Mammary epithelial cell (primary cell): ENCODE measurements at regions of chr13 and their contacts with region 1.

Region 1: DNA sequence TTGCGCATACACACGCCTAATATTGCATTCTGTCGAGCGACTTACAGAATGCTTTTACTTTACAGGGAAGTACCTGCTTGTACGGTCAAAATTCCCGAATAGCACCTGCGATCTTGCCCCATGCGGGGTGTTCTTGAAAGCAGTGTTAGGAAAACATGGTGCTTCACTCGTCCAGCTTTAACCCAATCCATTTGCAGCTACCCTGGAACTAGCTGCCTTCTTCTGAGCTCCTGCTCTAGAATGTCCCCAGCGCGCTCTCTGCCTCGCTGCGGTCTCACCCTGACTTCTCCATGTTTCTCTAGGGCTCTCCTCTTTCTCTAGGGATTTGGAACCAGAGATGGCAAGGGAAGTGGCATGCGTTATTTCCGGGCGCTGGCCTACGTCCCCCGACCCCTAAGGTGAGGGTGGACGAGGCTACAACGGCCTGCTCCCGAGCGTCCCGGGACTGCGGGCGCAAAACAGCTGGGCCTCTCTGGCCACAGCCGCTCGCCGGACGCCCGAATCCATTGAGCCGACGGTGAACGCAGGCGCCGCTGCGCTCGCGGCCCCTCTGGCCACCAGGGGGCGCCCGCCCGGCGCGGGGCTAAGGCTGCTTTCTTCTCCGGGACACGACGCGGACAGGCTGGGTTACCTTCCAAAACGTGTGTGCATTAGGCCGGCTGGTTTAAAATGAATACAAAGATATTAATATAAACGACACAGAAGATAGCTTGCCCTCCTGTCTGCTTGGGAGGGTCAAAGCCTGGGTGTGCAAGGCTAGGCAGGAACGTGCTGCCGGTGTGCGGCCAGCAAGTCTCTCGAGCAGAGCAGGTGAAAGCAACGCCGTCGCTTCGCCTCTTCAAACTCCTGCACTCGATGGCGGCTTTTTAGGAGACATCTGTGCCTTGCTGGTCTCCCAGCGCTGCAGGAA is 1.8 kb upstream of the SPRY2 start:
- DNase-seq: peak; percentile 75
- H3K4me3 ChIP-seq: peak overlapping the region; percentile 45 to 90 (median 59)
- H3K27ac ChIP-seq: no peak overlapping the region
- H3K4me1 ChIP-seq: peaks cover 12% of the 10 kb centered on the region
- H3K27me3 ChIP-seq: no peaks in the 10 kb centered on the region
- CTCF ChIP-seq: peak; percentile 90 to 95

Region 2: DNA sequence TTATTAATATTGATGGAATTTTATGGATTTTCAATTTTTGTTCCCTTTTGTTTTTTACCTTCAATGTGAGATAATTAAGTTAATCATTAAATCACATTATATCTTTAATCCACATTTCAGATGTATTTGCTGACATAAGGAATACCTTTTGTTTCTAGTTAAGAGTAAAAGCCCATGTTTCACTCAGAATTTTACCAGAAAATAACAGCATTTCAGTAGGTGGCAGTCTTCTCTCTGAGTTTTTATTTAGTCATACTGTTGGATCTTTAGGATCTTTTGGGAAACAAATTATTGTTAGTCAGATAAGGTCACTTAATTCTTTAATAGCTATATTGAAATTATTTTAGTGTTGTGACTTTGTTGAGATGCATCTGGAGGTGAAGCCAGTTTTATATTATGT is 793.8 kb before region 1 on chr13:
- CTCF ChIA-PET with region 1: no interaction called
- dilution Hi-C with region 1: no loop called
- in situ Hi-C with region 1: no loop called
- intact Hi-C with region 1: loop called (anchors 1 kb)
- DNase-seq: peak; percentile 23
- H3K4me3 ChIP-seq: no peak overlapping the region
- H3K27ac ChIP-seq: peak overlapping the region; percentile 3
- H3K4me1 ChIP-seq: peaks cover 5% of the 10 kb centered on the region
- H3K27me3 ChIP-seq: no peaks in the 10 kb centered on the region
- CTCF ChIP-seq: peak; percentile 48 to 55

Region 3: GRCh38 chr13:79775830-79776229 is 566.9 kb before region 1 on chr13:
- CTCF ChIA-PET with region 1: no interaction called
- dilution Hi-C with region 1: no loop called
- in situ Hi-C with region 1: loop called (anchors 10 kb)
- intact Hi-C with region 1: loop called (anchors 1 kb)
- DNase-seq: peak; percentile 46
- H3K4me3 ChIP-seq: no peak overlapping the region
- H3K27ac ChIP-seq: no peak overlapping the region
- H3K4me1 ChIP-seq: peaks cover 29% of the 10 kb centered on the region
- H3K27me3 ChIP-seq: no peaks in the 10 kb centered on the region
- CTCF ChIP-seq: peak; percentile 53 to 76

Region 4: DNA sequence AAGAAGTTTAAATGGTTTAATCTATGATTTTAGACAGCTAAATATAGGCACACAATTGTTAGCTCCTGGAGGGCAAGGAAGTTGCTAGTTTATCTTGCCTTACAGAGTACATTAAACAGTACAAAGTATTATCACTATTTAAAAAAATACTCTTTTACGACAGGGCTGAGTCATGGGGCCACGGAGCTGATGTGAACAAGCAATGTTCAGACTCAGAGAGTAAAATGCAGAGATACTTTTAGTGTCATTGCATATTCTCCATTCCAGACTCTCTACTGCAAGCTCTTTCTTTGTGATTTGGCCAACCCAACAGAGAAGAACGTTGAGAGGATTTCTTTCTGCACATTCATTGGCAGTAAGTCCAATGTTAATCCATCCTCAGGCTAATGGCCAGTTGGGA is 354.2 kb before region 1 on chr13:
- CTCF ChIA-PET with region 1: no interaction called
- dilution Hi-C with region 1: no loop called
- in situ Hi-C with region 1: no loop called
- intact Hi-C with region 1: loop called (anchors 1 kb)
- DNase-seq: peak; percentile 74
- H3K4me3 ChIP-seq: no peak overlapping the region
- H3K27ac ChIP-seq: peak overlapping the region; percentile 99
- H3K4me1 ChIP-seq: peaks cover 49% of the 10 kb centered on the region
- H3K27me3 ChIP-seq: no peaks in the 10 kb centered on the region
- CTCF ChIP-seq: no peak

Region 5: GRCh38 chr13:80048802-80049201 is 293.9 kb before region 1 on chr13:
- CTCF ChIA-PET with region 1: no interaction called
- dilution Hi-C with region 1: no loop called
- in situ Hi-C with region 1: loop called (anchors 5 to 25 kb)
- intact Hi-C with region 1: no loop called
- DNase-seq: peak; percentile 95
- H3K4me3 ChIP-seq: no peak overlapping the region
- H3K27ac ChIP-seq: peak overlapping the region; percentile 5
- H3K4me1 ChIP-seq: peaks cover 27% of the 10 kb centered on the region
- H3K27me3 ChIP-seq: no peaks in the 10 kb centered on the region
- CTCF ChIP-seq: no peak

Region 6: GRCh38 chr13:80265348-80265747 is 77.4 kb before region 1 on chr13:
- CTCF ChIA-PET with region 1: no interaction called
- dilution Hi-C with region 1: no loop called
- in situ Hi-C with region 1: no loop called
- intact Hi-C with region 1: no loop called
- DNase-seq: no peak
- H3K4me3 ChIP-seq: no peak overlapping the region
- H3K27ac ChIP-seq: no peak overlapping the region
- H3K4me1 ChIP-seq: no peaks in the 10 kb centered on the region
- H3K27me3 ChIP-seq: no peaks in the 10 kb centered on the region
- CTCF ChIP-seq: no peak

Region 7: DNA sequence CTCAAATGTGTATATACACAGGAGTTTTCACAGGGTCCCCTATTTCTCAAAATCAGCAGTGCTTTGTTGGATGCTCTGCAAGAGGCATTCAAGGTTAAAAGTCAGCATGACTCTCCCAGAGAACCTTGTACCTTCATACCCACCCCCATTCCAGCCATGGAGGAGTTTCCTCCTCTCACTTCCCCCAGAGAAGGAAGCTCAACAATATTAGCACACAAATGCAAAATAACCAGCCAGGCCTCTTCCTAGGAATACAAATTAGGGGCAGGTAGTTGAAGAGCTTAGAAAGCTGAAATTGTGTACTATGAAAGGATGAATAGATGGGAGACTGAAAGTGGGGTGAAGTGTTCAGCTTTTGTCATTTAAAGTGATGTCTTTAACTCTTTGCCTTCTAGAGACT is 45.6 kb before region 1 on chr13:
- CTCF ChIA-PET with region 1: no interaction called
- dilution Hi-C with region 1: no loop called
- in situ Hi-C with region 1: no loop called
- intact Hi-C with region 1: no loop called
- DNase-seq: no peak
- H3K4me3 ChIP-seq: no peak overlapping the region
- H3K27ac ChIP-seq: no peak overlapping the region
- H3K4me1 ChIP-seq: no peaks in the 10 kb centered on the region
- H3K27me3 ChIP-seq: no peaks in the 10 kb centered on the region
- CTCF ChIP-seq: no peak

Region 8: DNA sequence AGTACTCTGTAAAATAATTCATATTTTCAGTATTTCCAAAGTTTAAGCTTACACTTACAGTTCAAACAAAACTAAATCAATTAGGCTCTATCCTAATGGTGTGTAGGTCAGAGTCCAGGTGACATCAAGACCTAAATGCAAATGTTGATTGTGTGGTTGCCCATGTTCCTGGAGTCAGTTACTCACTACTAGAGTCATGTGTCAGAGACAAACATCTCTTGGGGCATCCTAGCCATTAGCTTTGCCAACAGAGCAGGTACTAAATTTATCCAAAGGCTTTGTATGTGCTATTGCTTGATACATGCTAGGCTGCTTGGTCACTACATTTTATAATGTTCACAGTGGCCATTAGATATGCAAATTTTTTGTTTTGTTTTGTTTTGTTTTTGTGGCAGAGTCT is 13.5 kb before region 1 on chr13:
- CTCF ChIA-PET with region 1: no interaction called
- dilution Hi-C with region 1: no loop called
- in situ Hi-C with region 1: no loop called
- intact Hi-C with region 1: no loop called
- DNase-seq: no peak
- H3K4me3 ChIP-seq: no peak overlapping the region
- H3K27ac ChIP-seq: no peak overlapping the region
- H3K4me1 ChIP-seq: no peaks in the 10 kb centered on the region
- H3K27me3 ChIP-seq: no peaks in the 10 kb centered on the region
- CTCF ChIP-seq: no peak

Region 9: DNA sequence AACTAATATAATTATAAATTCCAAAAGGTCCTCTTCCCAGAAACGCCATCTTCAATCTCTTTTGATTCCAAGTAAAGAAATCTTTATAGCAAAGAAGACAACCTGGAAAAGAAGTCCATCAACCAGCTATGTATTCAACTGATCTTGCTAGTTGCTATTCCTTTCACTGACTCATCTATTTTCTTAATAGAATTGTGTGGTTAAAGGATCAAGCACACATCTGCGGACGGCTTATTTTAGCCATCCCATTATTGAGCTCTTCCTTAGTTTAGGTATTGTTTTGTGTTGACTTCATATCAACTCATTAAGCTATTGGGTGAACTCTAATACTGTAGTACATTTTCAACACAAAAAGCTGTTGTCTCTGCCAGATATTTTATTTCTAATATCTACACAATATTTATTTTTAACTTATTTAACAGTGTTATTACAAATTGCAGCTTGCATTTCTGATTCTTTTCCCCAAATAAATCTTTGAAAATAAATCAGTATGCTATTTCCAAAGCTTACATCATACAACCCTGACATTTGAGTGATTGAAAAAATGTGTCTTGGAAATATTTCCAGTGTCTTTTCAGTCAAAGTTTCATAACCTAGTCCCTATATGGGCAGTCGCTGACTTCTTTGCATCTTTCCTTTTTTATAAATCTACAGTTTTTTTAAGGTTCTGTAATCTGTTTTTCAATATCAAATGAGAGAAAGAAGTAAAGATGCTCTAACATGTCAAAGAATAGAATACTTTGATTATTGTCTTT is 157.0 kb after region 1 on chr13:
- CTCF ChIA-PET with region 1: no interaction called
- dilution Hi-C with region 1: no loop called
- in situ Hi-C with region 1: no loop called
- intact Hi-C with region 1: no loop called
- DNase-seq: no peak
- H3K4me3 ChIP-seq: no peak overlapping the region
- H3K27ac ChIP-seq: no peak overlapping the region
- H3K4me1 ChIP-seq: no peaks in the 10 kb centered on the region
- H3K27me3 ChIP-seq: peaks cover 2% of the 10 kb centered on the region
- CTCF ChIP-seq: no peak

Region 10: DNA sequence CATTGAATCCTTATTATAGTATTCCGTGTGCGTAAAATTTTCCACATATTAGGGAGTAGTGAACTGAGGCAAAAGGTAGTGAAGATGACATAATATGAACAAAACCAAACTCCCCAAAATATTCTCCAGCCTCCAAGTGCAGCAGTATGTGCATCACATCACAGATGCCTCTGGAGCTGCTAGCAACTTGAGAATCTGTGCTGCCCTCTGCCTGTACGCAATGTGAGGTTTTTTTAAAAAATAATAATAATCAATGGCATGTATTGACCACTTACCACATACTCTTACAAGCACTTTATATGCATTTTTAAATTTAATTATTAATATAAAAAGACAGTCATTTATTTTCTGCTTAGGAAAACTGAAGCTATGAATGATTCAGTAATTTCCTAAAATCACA is 581.2 kb after region 1 on chr13:
- CTCF ChIA-PET with region 1: interaction called, 3 read pairs
- dilution Hi-C with region 1: no loop called
- in situ Hi-C with region 1: no loop called
- intact Hi-C with region 1: loop called (anchors 2 kb)
- DNase-seq: no peak
- H3K4me3 ChIP-seq: no peak overlapping the region
- H3K27ac ChIP-seq: no peak overlapping the region
- H3K4me1 ChIP-seq: no peaks in the 10 kb centered on the region
- H3K27me3 ChIP-seq: no peaks in the 10 kb centered on the region
- CTCF ChIP-seq: peak in 1 of 2 donors; percentile 36